Astrocyte of the cerebellum (primary cell): ENCODE measurements at regions of chr15 and their contacts with region 1.

Region 1: GRCh38 chr15:65258375-65259262 is 28.1 kb downstream of the PARP16 start:
- DNase-seq: no peak
- H3K4me3 ChIP-seq: no peak overlapping the region
- CTCF ChIP-seq: no peak

Region 2: GRCh38 chr15:65209701-65210618 is 48.7 kb before region 1 on chr15:
- in situ Hi-C with region 1: loop called (anchors 5 kb)
- DNase-seq: no peak
- H3K4me3 ChIP-seq: no peak overlapping the region
- CTCF ChIP-seq: no peak

Region 3: GRCh38 chr15:65550681-65551098 is 292.1 kb after region 1 on chr15:
- in situ Hi-C with region 1: no loop called
- DNase-seq: peak; percentile 88
- H3K4me3 ChIP-seq: no peak overlapping the region
- CTCF ChIP-seq: no peak